ENCODE measurements at regions of chr6 and their contacts with region 1.

Region 1: DNA sequence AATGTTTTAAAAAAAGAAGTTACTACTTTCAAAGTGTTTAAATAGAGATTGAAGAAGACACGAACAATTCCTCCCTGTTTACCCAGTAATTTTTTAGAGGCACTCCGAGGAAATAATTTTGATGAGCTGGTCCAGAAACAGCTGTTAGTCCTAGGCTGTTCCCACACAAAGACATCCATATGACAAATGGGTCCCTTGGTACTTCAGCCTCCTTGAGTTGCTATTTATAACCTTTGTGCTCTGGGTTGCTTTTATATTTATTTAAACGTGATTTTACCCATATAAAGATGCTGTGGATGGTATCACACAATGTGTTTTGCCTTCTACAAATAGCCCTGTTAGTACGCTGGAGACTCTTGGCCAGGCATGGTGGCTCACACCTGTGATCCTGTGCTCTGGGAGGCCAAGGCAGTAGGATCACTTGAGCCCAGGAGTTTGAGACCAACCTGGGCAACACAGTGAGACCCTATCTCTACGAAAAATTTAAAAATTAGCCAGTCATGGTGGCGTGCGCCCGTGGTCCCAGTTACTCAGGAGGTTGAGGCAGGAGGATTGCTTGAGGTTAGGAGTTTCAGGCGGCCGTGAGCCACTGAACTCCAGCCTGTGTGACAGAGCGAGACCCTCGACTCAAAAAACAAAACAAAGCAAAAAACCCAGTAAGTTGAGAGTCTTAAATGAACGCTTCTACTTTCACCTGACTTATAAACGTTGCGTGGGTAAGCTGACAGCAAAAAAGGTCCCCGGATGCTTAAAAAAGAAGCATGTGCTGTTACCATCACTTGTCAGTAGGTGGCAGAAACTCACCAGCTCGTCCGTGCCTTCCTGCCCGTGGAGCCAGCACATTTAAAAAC is 56.9 kb upstream of the ARMH2 start:
- DNase-seq: peak; percentile 86
- ATAC-seq: peak; percentile 42
- H3K4me3 ChIP-seq: no peak overlapping the region
- H3K4me3 Mint-ChIP-seq: peak overlapping the region; percentile 46
- H3K27ac ChIP-seq: peak overlapping the region; percentile 60 to 80
- H3K27ac Mint-ChIP-seq: peak overlapping the region; percentile 97
- H3K4me1 ChIP-seq: peaks cover 62% of the 10 kb centered on the region in 2 donors
- H3K4me1 Mint-ChIP-seq: peaks cover 60% of the 10 kb centered on the region
- H3K27me3 ChIP-seq: no peaks in the 10 kb centered on the region
- H3K27me3 Mint-ChIP-seq: no peaks in the 10 kb centered on the region
- CTCF ChIP-seq: peak; percentile 86

Region 2: GRCh38 chr6:24666641-24667377 is 188.8 kb before region 1 on chr6 and contains the starts of genes ACOT13 and TDP2:
- CTCF ChIA-PET with region 1: no interaction called
- POLR2A ChIA-PET with region 1: no interaction called
- intact Hi-C with region 1: no loop called
- DNase-seq: peak; percentile 98
- ATAC-seq: peak; percentile 94
- H3K4me3 ChIP-seq: peak within 1 kb of the TSS; percentile 74 to 100 (median 96)
- H3K4me3 Mint-ChIP-seq: peak within 1 kb of the TSS; percentile 99
- H3K27ac ChIP-seq: peak within 1 kb of the TSS; percentile 75 to 82
- H3K27ac Mint-ChIP-seq: peak within 1 kb of the TSS; percentile 98
- H3K4me1 ChIP-seq: peaks cover 22 to 23% of the 10 kb centered on the region in 2 donors
- H3K4me1 Mint-ChIP-seq: peaks cover 46% of the 10 kb centered on the region
- H3K27me3 ChIP-seq: no peaks in the 10 kb centered on the region
- H3K27me3 Mint-ChIP-seq: no peaks in the 10 kb centered on the region
- CTCF ChIP-seq: peak; percentile 67
- total RNA-seq, gene ACOT13: 5.7 and 6.6 TPM in 2 replicates
- total RNA-seq, gene TDP2: 63.5 and 68.1 TPM in 2 replicates

Region 3: GRCh38 chr6:24710519-24711303 is 144.9 kb before region 1 on chr6:
- CTCF ChIA-PET with region 1: no interaction called
- POLR2A ChIA-PET with region 1: no interaction called
- intact Hi-C with region 1: no loop called
- DNase-seq: no peak
- ATAC-seq: no peak
- H3K4me3 ChIP-seq: no peak overlapping the region
- H3K4me3 Mint-ChIP-seq: no peak overlapping the region
- H3K27ac ChIP-seq: peak overlapping the region in 1 of 2 donors; percentile 8
- H3K27ac Mint-ChIP-seq: no peak overlapping the region
- H3K4me1 ChIP-seq: peaks cover 0 to 16% of the 10 kb centered on the region in 2 donors
- H3K4me1 Mint-ChIP-seq: peaks cover 49% of the 10 kb centered on the region
- H3K27me3 ChIP-seq: no peaks in the 10 kb centered on the region
- H3K27me3 Mint-ChIP-seq: no peaks in the 10 kb centered on the region
- CTCF ChIP-seq: no peak

Region 4: DNA sequence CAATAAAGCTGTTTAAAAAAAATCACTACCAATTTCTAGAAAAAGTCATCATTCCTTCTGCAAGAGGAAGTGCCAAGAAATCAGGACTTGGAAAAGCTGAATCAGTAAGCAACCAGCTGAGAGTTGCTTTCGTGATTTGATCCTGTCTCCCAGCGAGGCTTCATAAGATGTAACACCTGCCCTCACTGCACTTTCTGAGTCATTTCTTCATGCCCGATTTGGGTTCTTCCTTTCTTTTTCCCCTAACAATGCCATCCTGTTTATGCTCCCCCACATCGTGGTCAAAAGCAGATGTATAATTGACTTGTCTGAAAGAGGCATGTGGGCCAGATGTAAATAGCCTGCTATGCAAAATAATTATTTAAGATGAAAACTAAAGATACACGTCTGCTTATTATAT is 28.0 kb after region 1 on chr6:
- CTCF ChIA-PET with region 1: interaction called, 15 read pairs
- POLR2A ChIA-PET with region 1: no interaction called
- intact Hi-C with region 1: no loop called
- DNase-seq: peak; percentile 27
- ATAC-seq: no peak
- H3K4me3 ChIP-seq: no peak overlapping the region
- H3K4me3 Mint-ChIP-seq: peak overlapping the region; percentile 76
- H3K27ac ChIP-seq: peak overlapping the region; percentile 26 to 84
- H3K27ac Mint-ChIP-seq: peak overlapping the region; percentile 87
- H3K4me1 ChIP-seq: peaks cover 69 to 74% of the 10 kb centered on the region in 2 donors
- H3K4me1 Mint-ChIP-seq: peaks cover 87% of the 10 kb centered on the region
- H3K27me3 ChIP-seq: no peaks in the 10 kb centered on the region
- H3K27me3 Mint-ChIP-seq: no peaks in the 10 kb centered on the region
- CTCF ChIP-seq: no peak

Region 5: DNA sequence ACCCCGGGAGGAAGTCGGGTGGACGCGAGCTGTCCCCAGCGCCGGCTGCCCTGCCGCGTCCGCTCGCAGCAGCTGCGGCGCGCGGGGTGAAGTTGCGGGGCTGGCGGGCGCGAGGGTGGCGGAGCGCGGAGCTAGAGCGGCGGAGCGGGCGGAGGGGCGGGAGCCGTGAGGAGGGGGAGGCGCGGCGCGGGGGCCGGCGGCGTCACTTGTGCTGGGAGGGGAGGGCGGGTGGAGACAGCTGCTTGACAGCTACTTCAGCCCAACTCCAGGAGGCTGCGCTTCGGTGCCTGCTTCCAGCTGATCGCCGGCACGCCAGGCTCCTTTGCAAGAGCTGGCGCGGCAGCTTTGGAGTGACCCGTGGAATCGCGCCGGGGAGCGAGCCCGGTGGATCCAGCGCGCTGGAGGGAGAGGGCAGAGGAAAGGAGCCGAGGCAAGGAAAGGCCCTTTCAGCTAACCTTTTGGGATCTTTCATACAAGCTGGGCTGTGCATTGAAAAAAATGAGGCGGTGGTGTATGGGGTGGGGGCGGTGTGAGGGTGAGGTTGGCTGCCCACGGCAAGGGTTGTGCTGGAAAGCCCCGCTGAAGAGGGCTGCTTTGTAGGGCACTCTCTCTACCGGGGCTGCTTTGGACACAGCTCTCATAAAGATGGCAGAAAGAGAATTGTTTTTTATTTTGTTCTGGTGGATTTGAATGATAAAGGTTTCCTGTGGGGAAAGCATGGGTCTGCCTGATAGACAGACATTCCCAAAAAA is 55.5 kb after region 1 on chr6:
- CTCF ChIA-PET with region 1: interaction called, 66 read pairs
- POLR2A ChIA-PET with region 1: interaction called, 3 read pairs
- intact Hi-C with region 1: loop called (anchors 2 kb)
- DNase-seq: no peak
- ATAC-seq: peak; percentile 38
- H3K4me3 ChIP-seq: peak overlapping the region; percentile 45 to 66 (median 58)
- H3K4me3 Mint-ChIP-seq: peak overlapping the region; percentile 90
- H3K27ac ChIP-seq: peak overlapping the region; percentile 83 to 93
- H3K27ac Mint-ChIP-seq: peak overlapping the region; percentile 89
- H3K4me1 ChIP-seq: peaks cover 97 to 98% of the 10 kb centered on the region in 2 donors
- H3K4me1 Mint-ChIP-seq: peaks cover 94% of the 10 kb centered on the region
- H3K27me3 ChIP-seq: no peaks in the 10 kb centered on the region
- H3K27me3 Mint-ChIP-seq: no peaks in the 10 kb centered on the region
- CTCF ChIP-seq: no peak

Region 6: DNA sequence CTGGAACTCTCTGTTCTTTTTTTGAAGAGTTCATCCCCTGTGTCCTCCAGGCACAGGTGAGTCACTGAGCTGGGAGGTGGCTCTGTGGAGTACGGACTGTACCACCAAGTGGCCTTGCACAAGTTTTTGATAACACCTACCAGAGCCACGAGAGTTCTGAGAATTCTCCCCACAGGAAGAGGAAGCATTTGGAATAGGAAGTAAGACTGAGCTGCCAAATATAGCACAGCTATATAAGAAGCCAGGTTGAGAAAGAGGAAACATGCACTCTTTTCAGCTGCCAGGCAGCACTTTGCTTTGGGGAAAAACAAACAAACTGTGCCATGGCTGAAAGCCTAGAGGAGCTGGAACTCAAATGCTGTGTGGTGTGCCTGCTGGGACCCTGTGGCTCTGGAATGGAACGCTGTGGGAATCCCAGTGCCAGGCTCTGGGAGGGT is 151.0 kb after region 1 on chr6:
- CTCF ChIA-PET with region 1: interaction called, 216 read pairs
- POLR2A ChIA-PET with region 1: no interaction called
- intact Hi-C with region 1: no loop called
- DNase-seq: peak; percentile 87
- ATAC-seq: peak; percentile 76
- H3K4me3 ChIP-seq: peak overlapping the region in 3 of 5 experiments; percentile 18 to 44 (median 32)
- H3K4me3 Mint-ChIP-seq: peak overlapping the region; percentile 63
- H3K27ac ChIP-seq: peak overlapping the region; percentile 95 to 98
- H3K27ac Mint-ChIP-seq: peak overlapping the region; percentile 92
- H3K4me1 ChIP-seq: peaks cover 47% of the 10 kb centered on the region in 2 donors
- H3K4me1 Mint-ChIP-seq: peaks cover 67% of the 10 kb centered on the region
- H3K27me3 ChIP-seq: no peaks in the 10 kb centered on the region
- H3K27me3 Mint-ChIP-seq: no peaks in the 10 kb centered on the region
- CTCF ChIP-seq: no peak

Region 7: GRCh38 chr6:25070547-25071366 is 215.1 kb after region 1 on chr6:
- CTCF ChIA-PET with region 1: interaction called, 57 read pairs
- POLR2A ChIA-PET with region 1: no interaction called
- intact Hi-C with region 1: loop called (anchors 1 kb)
- DNase-seq: peak; percentile 93
- ATAC-seq: peak; percentile 97
- H3K4me3 ChIP-seq: peak overlapping the region in 4 of 5 experiments; percentile 31 to 72 (median 48)
- H3K4me3 Mint-ChIP-seq: peak overlapping the region; percentile 86
- H3K27ac ChIP-seq: peak overlapping the region; percentile 74 to 80
- H3K27ac Mint-ChIP-seq: peak overlapping the region; percentile 97
- H3K4me1 ChIP-seq: peaks cover 0 to 4% of the 10 kb centered on the region in 2 donors
- H3K4me1 Mint-ChIP-seq: peaks cover 9% of the 10 kb centered on the region
- H3K27me3 ChIP-seq: no peaks in the 10 kb centered on the region
- H3K27me3 Mint-ChIP-seq: no peaks in the 10 kb centered on the region
- CTCF ChIP-seq: peak; percentile 95

Region 8: DNA sequence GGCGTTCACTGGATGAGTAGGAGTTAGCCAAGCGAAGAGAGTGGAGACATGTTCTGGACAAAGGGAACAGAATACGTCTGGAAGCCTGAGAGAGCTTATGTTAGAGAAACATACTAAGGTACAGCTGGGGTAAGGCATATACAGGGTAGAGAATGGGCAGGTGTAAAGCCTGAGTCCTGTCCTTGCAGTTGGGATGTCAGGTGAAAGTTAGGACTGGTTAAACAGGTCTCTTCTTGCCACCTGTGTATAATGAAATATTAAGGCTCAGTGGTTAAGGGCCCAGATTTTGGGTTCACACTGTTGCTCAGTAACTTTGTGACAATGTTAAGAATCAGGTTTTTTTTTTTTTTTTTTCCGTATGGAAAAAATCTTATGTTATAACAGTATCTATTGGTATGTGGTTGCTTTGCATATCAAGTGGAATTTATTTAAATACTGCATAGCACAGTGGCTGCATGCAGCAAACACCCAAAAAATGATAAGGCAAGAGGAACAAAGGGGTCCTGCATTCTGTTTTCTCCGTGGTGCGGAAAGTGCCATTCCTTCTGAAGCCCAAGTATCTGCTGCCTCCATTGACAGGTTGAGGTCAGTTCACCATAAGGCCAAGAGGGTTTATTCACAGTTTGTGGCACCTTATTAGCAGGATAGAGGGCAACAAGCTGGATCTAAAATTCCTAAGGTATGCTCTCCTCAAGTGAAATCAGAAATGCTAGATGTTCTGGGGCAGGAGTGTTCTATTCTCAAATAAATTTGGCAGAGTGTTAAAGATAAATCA is 432.7 kb after region 1 on chr6:
- CTCF ChIA-PET with region 1: no interaction called
- POLR2A ChIA-PET with region 1: no interaction called
- intact Hi-C with region 1: no loop called
- DNase-seq: no peak
- ATAC-seq: no peak
- H3K4me3 ChIP-seq: no peak overlapping the region
- H3K4me3 Mint-ChIP-seq: no peak overlapping the region
- H3K27ac ChIP-seq: no peak overlapping the region
- H3K27ac Mint-ChIP-seq: no peak overlapping the region
- H3K4me1 ChIP-seq: no peaks in the 10 kb centered on the region
- H3K4me1 Mint-ChIP-seq: peaks cover 3% of the 10 kb centered on the region
- H3K27me3 ChIP-seq: no peaks in the 10 kb centered on the region
- H3K27me3 Mint-ChIP-seq: no peaks in the 10 kb centered on the region
- CTCF ChIP-seq: no peak